Transverse colon (tissue), 4 donors: ENCODE measurements at regions of chr6 and their contacts with region 1.

Region 1: DNA sequence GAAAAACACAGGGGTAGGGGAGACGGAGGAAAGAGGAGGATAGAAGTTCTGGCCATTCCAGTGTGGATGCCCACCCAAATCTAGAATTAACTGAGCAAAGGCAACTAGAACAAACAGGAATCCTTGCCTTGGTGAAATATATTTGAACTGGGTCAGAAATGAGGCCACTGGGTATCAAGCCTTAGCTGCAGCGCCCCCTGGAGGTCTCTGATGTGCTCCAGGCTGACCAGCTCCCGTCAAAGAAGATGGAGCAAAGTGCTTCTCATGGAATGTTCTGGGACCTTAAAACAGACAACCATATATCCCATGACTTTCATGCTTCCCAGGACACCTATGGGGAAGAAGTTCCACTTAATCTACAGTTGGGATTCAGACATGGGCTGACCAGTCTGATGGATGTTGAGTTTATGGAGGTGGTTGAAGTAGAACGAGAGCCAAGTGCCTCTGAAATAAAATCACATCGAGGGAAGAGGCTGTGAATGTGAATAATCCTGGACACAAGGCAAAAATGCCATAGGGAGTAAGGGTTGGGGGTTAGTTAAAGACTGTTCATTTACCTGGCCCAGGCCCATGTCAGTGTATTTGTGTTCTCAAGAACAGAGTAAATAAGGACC is 50.4 kb downstream of the HLA-DPB1 start:
- DNase-seq: peak; percentile 66
- H3K4me3 ChIP-seq: no peak overlapping the region
- H3K27ac ChIP-seq: no peak overlapping the region
- H3K4me1 ChIP-seq: no peaks in the 10 kb centered on the region
- H3K27me3 ChIP-seq: no peaks in the 10 kb centered on the region
- CTCF ChIP-seq: peak; percentile 31 to 67 (median 54)
- EP300 ChIP-seq: no peak
- POLR2A ChIP-seq: no peak

Region 2: DNA sequence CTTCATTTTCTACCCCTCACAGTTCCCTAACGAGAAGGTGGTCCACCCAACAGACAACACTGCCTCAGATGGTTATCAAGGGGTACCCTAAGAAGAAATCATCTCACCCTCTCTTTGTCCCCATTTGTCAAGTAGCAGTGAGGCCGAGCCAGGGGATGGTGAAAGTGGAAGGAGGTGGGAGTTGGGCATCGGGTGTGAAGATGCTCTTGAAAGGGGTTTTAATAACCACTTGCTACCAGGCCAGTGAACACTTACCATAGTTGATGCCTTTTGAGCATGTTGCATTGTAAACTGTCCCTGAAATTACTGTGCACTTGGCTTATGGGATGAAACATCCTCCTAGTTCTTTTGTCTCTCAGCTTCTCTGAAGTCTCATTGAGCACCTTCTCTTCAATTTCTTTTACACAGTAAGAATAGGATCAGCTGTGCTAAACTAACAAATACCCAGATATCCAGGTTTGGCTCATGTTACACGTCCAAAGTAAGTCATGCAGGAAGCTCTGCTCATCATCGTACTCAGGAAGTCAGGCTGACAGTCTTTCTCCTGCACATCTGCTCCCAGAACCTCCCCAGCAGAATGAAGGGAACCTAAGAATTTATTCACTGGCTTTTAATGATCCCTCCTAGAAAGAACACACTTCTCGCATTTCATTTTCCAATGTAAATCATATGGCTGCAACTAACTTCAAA is 37.1 kb before region 1 on chr6:
- in situ Hi-C with region 1: no loop called
- intact Hi-C with region 1: loop called (anchors 1 kb)
- DNase-seq: no peak
- H3K4me3 ChIP-seq: no peak overlapping the region
- H3K27ac ChIP-seq: no peak overlapping the region
- H3K4me1 ChIP-seq: no peaks in the 10 kb centered on the region
- H3K27me3 ChIP-seq: no peaks in the 10 kb centered on the region
- CTCF ChIP-seq: no peak
- EP300 ChIP-seq: no peak
- POLR2A ChIP-seq: no peak